ENCODE measurements at regions of chr2 and their contacts with region 1.

Region 1: GRCh38 chr2:227661019-227661649 is 5.5 kb upstream of the SCYGR5 start:
- DNase-seq: no peak
- ATAC-seq: no peak
- H3K4me3 ChIP-seq: no peak overlapping the region
- H3K4me3 Mint-ChIP-seq: no peak overlapping the region
- H3K27ac ChIP-seq: no peak overlapping the region
- H3K27ac Mint-ChIP-seq: no peak overlapping the region
- H3K4me1 ChIP-seq: no peaks in the 10 kb centered on the region
- H3K4me1 Mint-ChIP-seq: no peaks in the 10 kb centered on the region
- H3K27me3 ChIP-seq: peaks cover 0 to 3% of the 10 kb centered on the region in 2 experiments
- H3K27me3 Mint-ChIP-seq: no peaks in the 10 kb centered on the region
- CTCF ChIP-seq: no peak

Region 2: DNA sequence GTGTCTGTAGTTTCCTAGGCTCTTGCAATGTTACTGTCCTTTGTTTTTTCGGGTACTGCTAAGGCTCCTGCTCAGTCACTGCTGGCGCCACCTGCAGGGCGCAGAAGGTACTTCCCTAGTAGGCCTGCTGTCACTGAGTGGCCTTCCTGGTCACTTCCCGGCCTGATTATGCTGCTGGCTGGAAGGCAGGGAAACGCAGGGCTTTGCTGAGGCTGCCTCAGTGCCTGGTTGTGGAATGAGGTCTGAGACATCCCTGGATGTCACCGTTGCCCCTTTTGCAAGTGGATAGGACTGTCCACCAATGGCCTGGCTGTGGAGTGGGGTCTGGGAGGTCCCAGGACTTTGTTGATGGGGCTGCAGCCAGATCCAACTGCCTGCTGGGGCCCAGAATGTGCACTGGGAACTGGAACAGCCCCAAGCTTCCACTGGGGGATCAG is 223.4 kb after region 1 on chr2:
- CTCF ChIA-PET with region 1: no interaction called
- POLR2A ChIA-PET with region 1: no interaction called
- intact Hi-C with region 1: loop called in 1 of 2 experiments (anchors 2 kb)
- DNase-seq: peak in 8 of 9 experiments; percentile 9 to 52 (median 34)
- ATAC-seq: peak; percentile 49
- H3K4me3 ChIP-seq: no peak overlapping the region
- H3K4me3 Mint-ChIP-seq: no peak overlapping the region
- H3K27ac ChIP-seq: no peak overlapping the region
- H3K27ac Mint-ChIP-seq: no peak overlapping the region
- H3K4me1 ChIP-seq: no peaks in the 10 kb centered on the region
- H3K4me1 Mint-ChIP-seq: no peaks in the 10 kb centered on the region
- H3K27me3 ChIP-seq: no peaks in the 10 kb centered on the region
- H3K27me3 Mint-ChIP-seq: no peaks in the 10 kb centered on the region
- CTCF ChIP-seq: peak; percentile 58